Activated CD4-positive, alpha-beta T cell treated with anti-CD3 and anti-CD28 coated beads, Interleukin-2, amount 10 ng/mL, durations not matched to agents 24 days and 14 days (primary cell): ENCODE measurements at regions of chr3 and their contacts with region 1.

Region 1: DNA sequence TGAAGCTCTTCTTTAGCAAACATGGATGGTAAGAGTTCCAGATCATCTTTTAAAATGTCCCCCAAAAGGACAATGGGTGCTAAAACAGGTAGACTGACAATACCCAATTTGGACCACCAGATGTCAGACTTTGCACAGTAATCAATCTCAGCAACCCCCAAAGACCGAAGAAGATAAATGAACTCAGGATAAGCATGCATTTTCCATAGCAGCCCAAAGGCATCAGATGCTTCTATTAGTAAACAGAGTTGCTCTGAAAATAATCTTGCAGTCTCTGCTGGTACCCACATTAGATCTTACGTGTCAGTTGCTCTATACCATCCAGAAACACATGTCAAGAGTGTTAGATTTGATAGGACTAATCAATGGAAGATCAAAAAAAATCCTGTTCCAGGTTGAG is 20.6 kb downstream of the MYH15 start:
- DNase-seq: peak; percentile 81
- H3K4me3 Mint-ChIP-seq: no peak overlapping the region
- H3K27ac Mint-ChIP-seq: no peak overlapping the region
- H3K4me1 Mint-ChIP-seq: peaks cover 2% of the 10 kb centered on the region
- H3K27me3 Mint-ChIP-seq: peaks cover 13% of the 10 kb centered on the region

Region 2: DNA sequence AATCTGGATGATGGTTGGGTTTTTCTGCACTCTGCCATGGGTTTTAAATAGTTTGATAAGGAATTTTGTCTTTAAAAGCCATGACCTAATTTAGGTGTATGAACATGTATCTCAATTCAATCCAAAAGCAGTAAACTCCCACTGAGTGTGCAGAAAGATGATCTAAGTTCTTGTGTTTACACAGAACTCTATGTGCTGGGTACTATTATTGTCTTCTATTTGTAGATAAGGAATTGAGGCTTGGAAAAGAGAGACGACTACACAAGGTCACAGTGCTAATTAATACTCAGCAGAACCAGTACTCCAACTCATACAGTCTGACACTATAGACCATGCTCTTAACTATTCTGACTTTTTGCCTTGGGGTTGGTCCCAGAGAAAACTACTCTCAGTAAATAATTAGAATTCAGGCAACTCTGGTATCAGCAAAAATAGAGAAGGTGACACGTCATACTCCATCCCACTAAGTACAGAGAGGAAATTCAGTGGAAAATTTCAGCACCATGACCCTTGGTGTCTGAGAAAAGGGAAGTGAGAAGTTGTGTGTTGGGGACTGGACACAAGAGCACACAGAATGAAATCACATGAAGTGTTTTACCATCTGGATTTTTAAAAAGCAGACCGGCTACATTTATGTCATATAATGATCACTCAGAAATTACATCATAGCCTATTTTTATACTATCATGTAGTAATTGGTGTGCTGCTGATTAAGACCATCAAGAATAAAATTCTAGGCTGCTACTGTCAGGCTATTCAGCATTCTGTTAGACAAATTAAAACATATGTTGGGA is 38.9 kb after region 1 on chr3:
- intact Hi-C with region 1: loop called (anchors 5 kb)
- DNase-seq: no peak
- H3K4me3 Mint-ChIP-seq: no peak overlapping the region
- H3K27ac Mint-ChIP-seq: no peak overlapping the region
- H3K4me1 Mint-ChIP-seq: no peaks in the 10 kb centered on the region
- H3K27me3 Mint-ChIP-seq: peaks cover 23% of the 10 kb centered on the region

Region 3: DNA sequence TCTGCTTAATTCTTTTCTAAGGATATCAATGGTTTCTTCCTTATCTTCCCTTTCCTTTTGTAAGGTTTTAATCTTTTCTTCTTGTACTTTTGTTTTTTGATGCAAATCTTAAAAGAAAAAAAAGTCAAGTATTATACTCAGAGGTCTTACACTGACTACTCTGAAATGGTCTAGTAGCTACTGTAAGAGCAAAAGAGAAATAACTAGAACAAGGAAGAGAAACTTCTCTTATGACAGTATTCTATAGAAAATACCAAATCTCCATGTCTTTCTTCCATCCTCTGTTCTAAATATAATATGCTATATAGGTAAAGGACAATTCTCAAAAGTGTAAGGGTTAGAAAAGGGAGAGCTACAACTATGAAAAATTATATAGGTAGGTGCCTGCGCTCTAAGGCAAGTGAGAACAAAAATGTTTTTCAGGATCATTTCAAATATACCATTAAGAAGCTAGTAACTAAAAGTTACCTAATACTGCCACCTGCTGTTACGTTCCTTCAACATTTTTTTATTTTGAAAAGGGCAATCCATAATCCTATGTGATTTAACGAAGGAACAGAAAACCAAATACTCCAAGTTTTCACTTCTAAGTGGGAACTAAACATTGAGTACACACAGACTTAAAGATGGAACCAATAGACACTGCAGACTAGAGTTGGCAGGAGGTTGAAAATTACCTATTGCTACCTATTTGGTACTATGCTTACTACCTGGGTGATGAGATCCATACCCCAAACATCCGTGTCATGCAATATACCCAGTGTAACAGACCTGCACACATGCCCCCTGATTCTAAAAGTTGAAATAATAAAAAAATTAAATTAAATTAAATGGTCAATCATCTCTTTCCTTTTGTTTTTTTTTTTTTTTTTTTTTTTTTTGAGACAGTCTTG is 62.7 kb after region 1 on chr3:
- intact Hi-C with region 1: loop called (anchors 1 kb)
- DNase-seq: peak; percentile 68
- H3K4me3 Mint-ChIP-seq: no peak overlapping the region
- H3K27ac Mint-ChIP-seq: no peak overlapping the region
- H3K4me1 Mint-ChIP-seq: peaks cover 9% of the 10 kb centered on the region
- H3K27me3 Mint-ChIP-seq: no peaks in the 10 kb centered on the region

Region 4: GRCh38 chr3:108642526-108642925 is 152.8 kb after region 1 on chr3:
- intact Hi-C with region 1: no loop called
- DNase-seq: no peak
- H3K4me3 Mint-ChIP-seq: no peak overlapping the region
- H3K27ac Mint-ChIP-seq: no peak overlapping the region
- H3K4me1 Mint-ChIP-seq: no peaks in the 10 kb centered on the region
- H3K27me3 Mint-ChIP-seq: no peaks in the 10 kb centered on the region

Region 5: GRCh38 chr3:108662130-108662738 is 172.5 kb after region 1 on chr3:
- intact Hi-C with region 1: loop called (anchors 5 kb)
- DNase-seq: peak; percentile 86
- H3K4me3 Mint-ChIP-seq: no peak overlapping the region
- H3K27ac Mint-ChIP-seq: no peak overlapping the region
- H3K4me1 Mint-ChIP-seq: peaks cover 8% of the 10 kb centered on the region
- H3K27me3 Mint-ChIP-seq: peaks cover 2% of the 10 kb centered on the region

Region 6: DNA sequence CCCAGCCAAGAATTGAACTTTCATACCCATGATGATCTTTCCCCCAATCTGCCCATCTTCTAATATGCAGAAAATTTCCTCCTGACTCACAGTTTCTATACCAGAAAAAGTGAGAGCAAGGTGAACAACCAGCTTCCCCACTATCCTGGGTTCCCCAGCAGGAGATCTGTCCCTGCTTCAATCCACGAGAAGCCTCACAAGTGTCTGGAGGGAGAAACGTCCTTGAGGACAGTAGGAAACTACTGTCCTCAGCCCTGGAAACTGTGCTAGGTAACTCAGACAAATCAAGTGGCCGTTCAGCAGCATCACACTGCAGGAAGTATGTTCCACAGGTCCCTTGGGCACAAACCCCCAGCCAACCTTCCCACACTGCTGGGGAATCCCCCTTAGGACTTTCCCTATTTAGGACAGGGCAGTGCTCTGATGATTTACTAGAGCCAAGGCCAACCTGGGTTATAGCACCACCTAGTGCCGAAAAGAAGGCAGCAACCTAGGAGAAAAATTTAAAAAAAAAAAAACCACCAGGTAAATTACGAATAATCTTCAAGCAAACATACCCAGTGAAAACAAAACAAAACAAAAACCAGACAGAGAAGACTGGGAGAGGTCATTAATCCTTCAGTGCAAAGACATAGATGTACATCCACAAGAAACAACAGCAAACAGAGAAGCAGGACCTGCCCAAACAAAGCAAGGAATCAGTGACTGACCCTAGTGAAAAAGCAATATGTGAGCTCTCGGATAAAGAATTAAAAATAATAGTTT is 592.2 kb after region 1 on chr3:
- intact Hi-C with region 1: loop called (anchors 1 kb)
- DNase-seq: peak; percentile 76
- H3K4me3 Mint-ChIP-seq: no peak overlapping the region
- H3K27ac Mint-ChIP-seq: no peak overlapping the region
- H3K4me1 Mint-ChIP-seq: peaks cover 4% of the 10 kb centered on the region
- H3K27me3 Mint-ChIP-seq: peaks cover 43% of the 10 kb centered on the region